ENCODE measurements at regions of chr4 and their contacts with region 1.

Region 1: GRCh38 chr4:6673660-6674499 is 19.8 kb upstream of the S100P start:
- H3K4me3 ChIP-seq: peak overlapping the region; percentile 52
- H3K27ac ChIP-seq: peak overlapping the region; percentile 75
- H3K4me1 ChIP-seq: no peaks in the 10 kb centered on the region
- CTCF ChIP-seq: no peak

Region 2: GRCh38 chr4:6595897-6596537 is 77.9 kb before region 1 on chr4:
- CTCF ChIA-PET with region 1: no interaction called
- POLR2A ChIA-PET with region 1: no interaction called
- H3K4me3 ChIP-seq: no peak overlapping the region
- H3K27ac ChIP-seq: no peak overlapping the region
- H3K4me1 ChIP-seq: no peaks in the 10 kb centered on the region
- CTCF ChIP-seq: no peak

Region 3: DNA sequence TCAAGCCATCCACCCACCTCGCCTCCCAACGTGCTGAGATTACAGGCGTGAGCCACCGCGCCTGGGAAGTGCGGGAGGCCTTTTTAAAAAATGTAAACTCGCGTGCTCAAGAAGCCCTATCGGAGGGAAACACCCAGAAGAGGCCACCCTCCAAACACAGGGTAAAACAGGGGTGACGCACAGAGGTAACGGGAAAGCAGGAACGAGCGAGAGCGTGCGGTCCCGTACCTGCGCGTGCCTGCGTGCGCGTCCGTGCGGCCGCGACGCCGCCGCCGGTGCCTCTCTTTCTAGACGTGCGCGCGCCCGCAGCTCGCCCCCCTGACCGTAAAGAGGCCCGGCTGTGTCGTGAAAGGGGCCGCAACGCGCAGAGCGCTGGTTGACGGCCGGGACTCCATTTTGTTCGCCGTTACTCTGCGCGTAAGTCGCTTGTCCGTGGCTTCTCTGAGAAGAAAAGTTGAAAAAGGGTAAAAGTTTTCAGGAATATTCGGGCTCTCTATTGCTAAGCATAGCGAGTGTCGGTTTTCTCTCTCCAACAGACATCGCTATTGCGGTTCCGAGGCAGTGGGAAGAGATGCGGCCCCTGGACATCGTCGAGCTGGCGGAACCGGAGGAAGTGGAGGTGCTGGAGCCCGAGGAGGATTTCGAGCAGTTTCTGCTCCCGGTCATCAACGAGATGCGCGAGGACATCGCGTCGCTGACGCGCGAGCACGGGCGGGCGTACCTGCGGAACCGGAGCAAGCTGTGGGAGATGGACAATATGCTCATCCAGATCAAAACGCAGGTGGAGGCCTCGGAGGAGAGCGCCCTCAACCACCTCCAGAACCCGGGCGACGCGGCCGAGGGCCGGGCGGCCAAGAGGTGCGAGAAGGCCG is 33.4 kb before region 1 on chr4 and contains the start of gene MRFAP1:
- CTCF ChIA-PET with region 1: interaction called, 3 read pairs
- POLR2A ChIA-PET with region 1: interaction called, 12 read pairs
- H3K4me3 ChIP-seq: peak within 1 kb of the TSS; percentile 79
- H3K27ac ChIP-seq: peak within 1 kb of the TSS; percentile 89
- H3K4me1 ChIP-seq: no peaks in the 10 kb centered on the region
- CTCF ChIP-seq: no peak

Measured in HEK293 (cell line).